ENCODE measurements at regions of chr9 and their contacts with region 1.

Region 1: DNA sequence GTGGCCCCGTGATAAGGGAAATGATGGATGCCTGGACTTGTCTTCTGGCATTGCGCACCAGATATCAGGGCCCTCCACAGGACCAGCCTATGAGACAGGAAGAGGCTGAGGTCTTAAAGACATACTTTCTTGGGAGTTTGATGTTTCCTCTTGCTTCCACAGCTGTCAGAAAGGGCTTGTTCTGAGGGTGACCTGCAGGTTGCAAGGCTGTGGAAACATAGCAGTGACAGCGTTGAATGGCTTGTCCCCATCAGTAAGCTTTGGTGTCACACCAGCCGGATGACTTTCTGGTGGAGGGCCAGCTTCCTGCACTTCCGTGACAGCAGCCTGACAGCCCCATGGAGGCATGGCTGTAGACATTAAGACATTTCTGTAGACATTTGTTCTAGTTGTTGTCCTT is 143.2 kb downstream of the C9orf152 start:
- DNase-seq: no peak
- H3K4me3 ChIP-seq: no peak overlapping the region
- H3K27ac ChIP-seq: peak overlapping the region in 1 of 59 donors; percentile 2
- H3K27me3 ChIP-seq: no peaks in the 10 kb centered on the region
- CTCF ChIP-seq: no peak

Region 2: GRCh38 chr9:110133608-110134210 is 68.9 kb after region 1 on chr9:
- intact Hi-C with region 1: no loop called
- DNase-seq: no peak
- H3K4me3 ChIP-seq: no peak overlapping the region
- H3K27ac ChIP-seq: no peak overlapping the region
- H3K27me3 ChIP-seq: no peaks in the 10 kb centered on the region
- CTCF ChIP-seq: no peak

Region 3: GRCh38 chr9:110143950-110144545 is 79.2 kb after region 1 on chr9:
- intact Hi-C with region 1: loop called in 1 of 2 experiments (anchors 5 kb)
- DNase-seq: no peak
- H3K4me3 ChIP-seq: no peak overlapping the region
- H3K27ac ChIP-seq: peak overlapping the region in 9 of 59 donors; percentile 11 to 50 (median 23)
- H3K27me3 ChIP-seq: no peaks in the 10 kb centered on the region
- CTCF ChIP-seq: no peak